Activated CD4-positive, alpha-beta memory T cell treated with anti-CD3 and anti-CD28 coated beads, Interleukin-2, amount 10 ng/mL, durations not matched to agents 7 days and 5 days (primary cell): ENCODE measurements at regions of chr18 and their contacts with region 1.

Region 1: GRCh38 chr18:3321133-3321812 is 59.3 kb downstream of the MYL12B start:
- DNase-seq: no peak
- H3K4me3 Mint-ChIP-seq: no peak overlapping the region
- H3K27ac Mint-ChIP-seq: no peak overlapping the region
- H3K4me1 Mint-ChIP-seq: peaks cover 25% of the 10 kb centered on the region
- H3K27me3 Mint-ChIP-seq: peaks cover 9% of the 10 kb centered on the region

Region 2: DNA sequence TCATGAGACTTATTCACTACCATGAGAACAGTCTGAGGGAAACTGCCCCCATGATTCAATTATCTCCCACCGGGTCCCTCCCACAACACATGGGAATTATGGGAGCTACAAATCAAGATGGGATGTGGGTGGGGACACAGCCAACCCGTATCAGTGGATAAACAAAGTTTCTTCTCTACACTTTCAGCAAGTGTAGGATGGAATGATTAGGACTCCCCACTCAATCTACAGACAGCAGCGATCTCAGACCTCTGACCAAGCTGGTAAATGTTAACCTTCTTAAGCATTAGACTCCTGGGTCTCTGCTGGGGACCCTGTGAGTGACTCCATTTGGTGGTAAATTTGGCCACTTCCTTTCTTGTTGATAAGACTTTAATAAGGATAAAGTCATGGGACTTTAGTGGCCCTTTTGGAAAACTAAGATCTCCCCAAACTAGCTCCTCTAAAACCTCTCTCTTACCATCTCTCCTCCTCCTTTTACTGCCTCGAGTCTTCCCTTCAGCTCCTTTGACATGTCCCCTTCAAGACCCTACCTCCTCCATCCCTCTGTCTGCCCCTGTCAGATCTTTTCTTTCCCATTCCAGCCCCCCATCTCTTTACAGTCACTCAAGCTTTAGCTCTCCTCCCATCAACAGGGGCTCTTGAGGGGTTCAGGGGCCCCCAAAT is 12.6 kb after region 1 on chr18:
- CTCF ChIA-PET with region 1: interaction called, 14 read pairs
- POLR2A ChIA-PET with region 1: no interaction called
- DNase-seq: no peak
- H3K4me3 Mint-ChIP-seq: no peak overlapping the region
- H3K27ac Mint-ChIP-seq: no peak overlapping the region
- H3K4me1 Mint-ChIP-seq: no peaks in the 10 kb centered on the region
- H3K27me3 Mint-ChIP-seq: peaks cover 6% of the 10 kb centered on the region

Region 3: DNA sequence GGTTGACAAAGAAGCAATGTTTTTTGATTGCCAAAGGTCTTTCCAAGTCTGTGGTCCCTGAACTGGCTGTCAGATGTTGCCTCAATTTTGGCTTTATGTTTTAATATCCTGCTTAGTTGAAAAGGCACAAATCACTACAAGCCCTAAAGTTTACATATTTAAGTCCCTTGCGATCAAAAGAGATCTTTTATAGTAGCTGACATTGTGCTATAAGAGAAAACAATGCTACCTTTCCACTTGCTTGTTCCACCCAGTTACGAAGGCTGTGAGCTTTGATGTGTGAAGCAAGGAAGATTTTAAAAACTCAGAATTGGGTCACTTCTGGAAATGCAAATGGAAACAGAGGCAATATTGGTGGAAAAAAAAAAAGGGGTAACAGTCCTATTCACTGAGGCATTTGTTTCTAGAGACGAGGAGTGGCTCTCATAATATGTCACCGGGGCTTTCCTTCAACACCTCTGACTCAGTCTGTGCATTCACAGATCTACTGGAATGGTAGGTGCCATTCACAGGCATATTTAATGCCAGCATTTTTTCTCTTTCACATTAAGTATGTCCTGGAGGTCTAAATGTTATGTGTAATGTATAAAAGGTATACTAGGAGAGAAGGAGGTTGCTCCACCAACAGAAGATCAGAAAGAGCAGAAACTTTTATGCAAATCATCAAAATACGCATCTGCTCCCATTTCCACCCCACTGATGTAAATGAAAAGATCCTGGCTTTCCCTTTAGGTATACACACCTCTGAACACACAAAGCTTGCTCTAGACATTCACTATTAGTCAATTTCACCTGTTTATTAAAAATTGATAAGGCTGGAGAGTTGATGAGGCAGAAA is 220.5 kb after region 1 on chr18:
- CTCF ChIA-PET with region 1: no interaction called
- POLR2A ChIA-PET with region 1: no interaction called
- DNase-seq: no peak
- H3K4me3 Mint-ChIP-seq: no peak overlapping the region
- H3K27ac Mint-ChIP-seq: no peak overlapping the region
- H3K4me1 Mint-ChIP-seq: peaks cover 8% of the 10 kb centered on the region
- H3K27me3 Mint-ChIP-seq: no peaks in the 10 kb centered on the region